ENCODE measurements at regions of chr17 and their contacts with region 1.

Region 1: DNA sequence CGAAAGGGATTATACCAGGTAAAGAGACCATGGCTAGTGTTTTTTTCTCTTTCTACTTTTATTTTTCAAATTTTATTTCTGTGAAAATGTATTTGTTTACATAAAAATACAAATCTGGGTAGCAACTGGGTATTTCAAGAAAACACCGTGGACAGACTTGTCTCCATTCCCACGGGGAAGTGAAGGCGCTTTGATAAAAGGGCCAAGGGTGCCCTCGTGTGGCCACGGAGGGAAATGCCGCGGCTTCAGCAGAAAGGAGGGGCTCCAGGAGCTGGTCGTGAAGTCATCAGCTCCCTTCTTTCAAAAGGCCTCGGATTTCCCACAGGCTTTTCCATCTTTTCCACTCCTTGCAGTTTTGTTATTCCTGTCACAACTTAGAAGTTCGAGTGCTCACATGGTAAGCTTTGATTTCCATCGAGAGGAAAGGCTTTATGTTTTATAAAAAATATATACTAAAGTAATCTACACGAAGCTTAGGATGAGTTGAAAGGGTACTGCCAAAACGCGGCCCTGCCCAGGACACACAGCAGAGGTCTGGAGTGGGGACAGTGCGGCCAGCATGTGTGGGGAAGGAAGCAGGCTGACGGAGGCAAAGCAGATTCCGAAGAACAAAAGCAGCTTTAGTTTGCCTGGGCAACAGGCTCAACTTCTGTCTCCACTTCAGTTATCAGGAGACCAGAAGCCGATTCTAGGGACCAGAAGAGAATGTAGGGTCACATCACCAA is 15.3 kb upstream of the MNT start:
- DNase-seq: peak; percentile 90
- ATAC-seq: peak; percentile 70
- H3K4me3 Mint-ChIP-seq: no peak overlapping the region
- H3K27ac Mint-ChIP-seq: no peak overlapping the region
- H3K4me1 Mint-ChIP-seq: peaks cover 5% of the 10 kb centered on the region
- H3K27me3 Mint-ChIP-seq: no peaks in the 10 kb centered on the region

Region 2: DNA sequence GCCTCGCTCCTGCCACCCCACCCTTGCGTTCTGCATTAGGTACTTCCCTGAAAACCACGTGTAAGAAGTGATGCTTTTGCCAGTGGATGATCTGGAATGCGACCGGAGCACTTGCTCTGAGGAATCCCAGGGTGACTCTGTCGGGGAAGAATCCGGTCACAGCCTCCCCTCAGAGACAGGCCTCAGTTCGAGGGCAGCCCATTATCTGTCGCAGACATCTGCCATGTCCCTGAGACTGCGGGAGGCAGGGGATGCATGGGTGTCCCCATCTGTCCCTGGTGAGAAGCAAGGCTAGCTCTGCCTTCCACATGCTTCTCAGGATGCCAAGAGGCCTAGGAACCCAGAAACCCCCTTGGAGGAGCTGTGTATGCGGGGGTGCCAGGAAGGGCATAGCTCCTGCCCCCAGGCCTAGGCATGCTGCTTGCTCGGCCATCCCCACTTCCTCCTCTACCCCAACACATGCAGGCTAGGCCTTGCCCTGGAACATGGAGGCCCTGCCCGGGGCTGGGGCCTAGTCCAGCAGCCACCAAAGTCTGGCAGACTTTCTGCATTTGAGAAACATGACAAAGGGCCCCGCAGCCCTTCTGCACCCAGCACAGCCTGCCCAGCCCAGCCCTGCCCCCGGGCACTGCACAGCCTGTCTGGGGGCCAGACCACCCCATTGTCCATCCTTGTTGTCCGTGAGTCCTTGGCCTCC is 35.8 kb before region 1 on chr17:
- CTCF ChIA-PET with region 1: interaction called, 323 read pairs
- DNase-seq: no peak
- ATAC-seq: no peak
- H3K4me3 Mint-ChIP-seq: no peak overlapping the region
- H3K27ac Mint-ChIP-seq: no peak overlapping the region
- H3K4me1 Mint-ChIP-seq: peaks cover 4% of the 10 kb centered on the region
- H3K27me3 Mint-ChIP-seq: no peaks in the 10 kb centered on the region

Region 3: DNA sequence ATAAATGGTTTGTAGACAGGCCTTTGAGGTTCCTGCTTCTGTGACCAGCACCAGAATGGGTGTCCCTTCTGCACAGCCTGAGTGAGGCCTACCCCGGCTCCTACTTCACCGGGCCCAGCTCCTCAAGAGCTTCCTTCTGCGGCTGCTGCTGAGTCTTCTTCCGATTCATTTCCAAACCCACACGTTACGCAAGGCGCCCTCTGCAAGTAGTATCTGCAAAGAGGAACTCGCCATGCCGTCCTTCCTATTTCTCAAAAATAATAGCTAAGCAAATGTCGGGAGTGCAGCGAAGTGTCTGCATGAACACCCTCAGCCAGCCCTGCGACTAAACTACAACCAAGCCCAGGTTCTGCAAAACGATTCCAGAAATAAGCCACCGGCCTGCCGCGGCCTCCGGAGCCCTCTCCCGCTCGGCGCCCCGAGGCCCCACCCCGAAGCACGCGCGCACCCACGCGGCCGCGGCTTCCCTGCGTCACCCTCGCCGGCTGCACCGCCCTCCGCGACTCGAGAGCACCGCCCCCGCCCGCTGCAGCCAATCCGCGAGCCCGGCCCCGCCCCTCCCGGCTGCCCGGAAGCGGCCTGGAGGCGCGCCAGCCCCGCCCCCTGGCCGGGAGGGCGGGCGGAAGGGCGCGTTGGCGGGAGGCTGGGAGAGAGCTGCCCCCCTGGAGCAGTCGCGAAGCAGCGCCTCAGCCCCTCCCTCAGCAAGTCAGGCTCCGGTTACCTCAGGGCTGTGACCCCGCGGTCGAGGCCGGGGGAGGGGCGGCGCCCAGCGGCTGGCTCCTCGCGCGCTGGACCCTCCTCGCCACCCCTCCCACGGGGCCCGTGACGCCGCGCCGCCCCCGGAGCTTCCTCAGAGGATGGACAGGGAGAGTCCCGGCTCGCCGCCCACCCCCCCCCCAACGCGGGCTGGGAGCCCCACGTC is 23.7 kb before region 1 on chr17:
- CTCF ChIA-PET with region 1: interaction called, 48 read pairs
- DNase-seq: peak; percentile 97
- ATAC-seq: peak; percentile 69
- H3K4me3 Mint-ChIP-seq: peak overlapping the region; percentile 94
- H3K27ac Mint-ChIP-seq: peak overlapping the region; percentile 96
- H3K4me1 Mint-ChIP-seq: peaks cover 53% of the 10 kb centered on the region
- H3K27me3 Mint-ChIP-seq: no peaks in the 10 kb centered on the region

Region 4: DNA sequence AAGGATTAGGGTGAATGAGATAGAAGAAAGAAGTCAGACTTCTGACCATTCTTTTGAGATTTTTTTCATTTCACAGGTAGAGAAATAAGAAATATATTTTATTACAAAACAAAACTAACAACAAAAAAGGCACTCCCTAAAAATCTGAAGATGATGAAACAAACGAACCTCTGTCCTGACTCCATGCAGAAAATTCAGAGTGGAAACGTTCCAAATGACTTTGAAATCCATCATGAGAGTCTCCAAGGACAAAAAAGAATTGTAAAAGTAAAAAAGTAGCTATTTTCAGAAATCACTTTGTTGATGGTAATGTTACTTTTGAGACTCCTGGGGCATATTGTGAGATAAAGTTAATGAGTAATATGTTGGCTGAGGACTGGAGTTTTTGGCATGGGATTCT is 11.0 kb after region 1 on chr17:
- CTCF ChIA-PET with region 1: interaction called, 14 read pairs
- DNase-seq: no peak
- ATAC-seq: no peak
- H3K4me3 Mint-ChIP-seq: no peak overlapping the region
- H3K27ac Mint-ChIP-seq: no peak overlapping the region
- H3K4me1 Mint-ChIP-seq: no peaks in the 10 kb centered on the region
- H3K27me3 Mint-ChIP-seq: no peaks in the 10 kb centered on the region

Region 5: GRCh38 chr17:2511462-2512369 is 95.5 kb after region 1 on chr17 and contains the start of gene METTL16:
- CTCF ChIA-PET with region 1: interaction called, 12 read pairs
- DNase-seq: peak; percentile 99
- ATAC-seq: peak; percentile 99
- H3K4me3 Mint-ChIP-seq: no peak within 1 kb of the TSS
- H3K27ac Mint-ChIP-seq: peak within 1 kb of the TSS; percentile 13
- H3K4me1 Mint-ChIP-seq: peaks cover 14% of the 10 kb centered on the region
- H3K27me3 Mint-ChIP-seq: no peaks in the 10 kb centered on the region
- total RNA-seq, gene METTL16: 24.0 to 34.1 TPM

Measured in activated CD8-positive, alpha-beta memory T cell treated with anti-CD3 and anti-CD28 coated beads, Interleukin-2, amount 10 ng/mL, durations not matched to agents 7 days and 5 days (primary cell).